ENCODE measurements at regions of chr1 and their contacts with region 1.

Region 1: GRCh38 chr1:84753516-84754385 is 63.5 kb upstream of the SSX2IP start:
- DNase-seq: peak; percentile 75
- H3K4me3 ChIP-seq: no peak overlapping the region
- H3K27ac ChIP-seq: no peak overlapping the region
- H3K27me3 ChIP-seq: peaks cover 2% of the 10 kb centered on the region
- CTCF ChIP-seq: peak; percentile 100

Region 2: DNA sequence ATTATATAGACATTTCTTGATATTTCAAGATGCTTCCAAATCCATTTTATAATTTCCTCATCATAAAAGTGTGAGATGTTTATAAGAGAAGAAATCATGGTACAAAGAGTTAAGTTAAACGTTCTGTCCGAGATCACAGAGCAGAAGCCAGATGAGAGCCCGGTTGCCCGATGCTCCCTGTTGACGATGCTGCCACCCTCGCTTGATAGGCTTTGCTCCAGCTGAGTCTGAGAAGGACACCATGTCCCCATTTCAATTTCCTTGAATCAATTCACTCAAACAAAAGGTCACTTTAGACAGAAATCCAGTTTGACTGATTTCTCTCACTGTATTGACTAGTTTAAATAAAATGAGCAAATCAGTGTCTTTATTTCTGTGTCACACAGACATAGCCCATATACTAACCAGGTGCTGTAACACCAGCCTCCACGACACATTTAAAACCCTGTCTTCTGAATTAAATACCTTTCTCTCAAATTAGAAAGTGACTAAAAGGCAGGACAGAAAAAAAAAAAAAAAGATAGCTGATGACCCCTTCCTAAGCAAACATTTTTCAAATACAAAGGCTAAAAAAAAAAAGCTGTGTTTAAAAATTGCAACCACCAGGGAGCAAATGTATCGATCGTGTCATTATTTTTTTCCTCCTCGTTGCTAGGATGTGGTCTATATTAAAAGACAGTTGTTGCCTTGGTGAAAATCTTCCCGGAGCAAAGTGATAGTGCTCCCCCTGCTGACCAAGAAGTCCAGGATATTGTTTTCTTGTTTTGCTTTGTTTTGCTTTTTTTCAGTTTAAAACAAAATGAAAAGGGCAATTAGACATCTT is 320.3 kb before region 1 on chr1:
- CTCF ChIA-PET with region 1: interaction called, 12 read pairs
- POLR2A ChIA-PET with region 1: no interaction called
- DNase-seq: peak; percentile 58
- H3K4me3 ChIP-seq: no peak overlapping the region; the same call in 1 of the 2 replicates
- H3K27ac ChIP-seq: no peak overlapping the region
- H3K27me3 ChIP-seq: no peaks in the 10 kb centered on the region
- CTCF ChIP-seq: peak; percentile 79

Region 3: GRCh38 chr1:84506002-84506728 is 247.6 kb before region 1 on chr1 and contains the starts of genes GNG5 and SPATA1:
- CTCF ChIA-PET with region 1: interaction called, 16 read pairs
- POLR2A ChIA-PET with region 1: interaction called, 4 read pairs
- DNase-seq: peak; percentile 91
- H3K4me3 ChIP-seq: peak within 1 kb of the TSS; percentile 76
- H3K27ac ChIP-seq: peak within 1 kb of the TSS; percentile 97
- H3K27me3 ChIP-seq: no peaks in the 10 kb centered on the region
- CTCF ChIP-seq: no peak
- polyA plus RNA-seq, gene GNG5: 124 and 136 TPM in 2 replicates
- polyA plus RNA-seq, gene SPATA1: 0.81 and 0.99 TPM in 2 replicates

Region 4: GRCh38 chr1:84653130-84653677 is 100.5 kb before region 1 on chr1:
- CTCF ChIA-PET with region 1: interaction called, 13 read pairs
- POLR2A ChIA-PET with region 1: no interaction called
- DNase-seq: no peak
- H3K4me3 ChIP-seq: no peak overlapping the region
- H3K27ac ChIP-seq: no peak overlapping the region
- H3K27me3 ChIP-seq: no peaks in the 10 kb centered on the region
- CTCF ChIP-seq: peak; percentile 8; the same call in 1 of the 2 replicates

Region 5: DNA sequence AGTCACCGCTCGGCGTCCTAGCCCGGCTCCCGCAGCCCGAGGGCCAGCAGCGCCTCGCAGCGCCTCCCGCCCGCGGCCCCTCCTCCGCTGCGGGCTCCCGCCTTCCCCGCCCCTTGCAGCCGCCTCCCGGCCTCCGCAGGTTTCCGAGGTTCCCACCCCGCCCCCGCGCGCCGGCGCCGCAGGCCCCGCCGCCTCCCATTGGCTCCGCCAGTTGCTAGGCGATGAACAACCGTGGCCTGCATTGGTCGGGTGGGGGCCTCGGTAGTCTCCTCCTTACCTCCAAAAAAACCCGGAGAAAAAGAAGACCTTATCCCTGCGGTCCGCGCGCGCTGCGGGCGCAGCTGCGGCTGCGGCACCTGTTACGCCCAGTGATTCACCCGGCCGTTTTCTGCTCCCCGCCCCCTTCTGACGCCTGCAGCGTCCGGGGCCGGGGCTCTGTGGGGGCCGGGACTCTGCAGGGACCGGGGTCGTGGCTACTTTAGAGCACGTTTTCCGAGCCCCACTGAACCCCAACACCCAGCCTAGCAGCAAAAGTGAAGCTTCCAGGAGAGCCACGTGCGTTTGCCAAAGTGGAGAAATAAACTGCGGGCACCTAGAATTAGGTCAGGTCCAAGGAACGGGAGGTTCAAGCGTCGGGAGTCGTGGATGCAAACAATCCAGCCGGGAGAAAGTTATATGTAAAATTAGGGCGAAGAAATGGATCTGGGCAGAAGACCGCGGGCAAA is 63.2 kb before region 1 on chr1 and contains the start of gene SSX2IP:
- CTCF ChIA-PET with region 1: interaction called, 18 read pairs
- POLR2A ChIA-PET with region 1: no interaction called
- DNase-seq: peak; percentile 90
- H3K4me3 ChIP-seq: peak within 1 kb of the TSS; percentile 73
- H3K27ac ChIP-seq: peak within 1 kb of the TSS; percentile 75
- H3K27me3 ChIP-seq: no peaks in the 10 kb centered on the region
- CTCF ChIP-seq: no peak
- polyA plus RNA-seq, gene SSX2IP: 21.4 and 31.7 TPM in 2 replicates

Region 6: GRCh38 chr1:84763912-84764663 is 10.3 kb after region 1 on chr1:
- CTCF ChIA-PET with region 1: interaction called, 14 read pairs
- POLR2A ChIA-PET with region 1: no interaction called
- DNase-seq: no peak
- H3K4me3 ChIP-seq: no peak overlapping the region
- H3K27ac ChIP-seq: no peak overlapping the region
- H3K27me3 ChIP-seq: peaks cover 16% of the 10 kb centered on the region
- CTCF ChIP-seq: no peak

Region 7: GRCh38 chr1:84936116-84936810 is 182.5 kb after region 1 on chr1:
- CTCF ChIA-PET with region 1: interaction called, 34 read pairs
- POLR2A ChIA-PET with region 1: no interaction called
- DNase-seq: peak; percentile 38
- H3K4me3 ChIP-seq: no peak overlapping the region
- H3K27ac ChIP-seq: no peak overlapping the region
- H3K27me3 ChIP-seq: no peaks in the 10 kb centered on the region
- CTCF ChIP-seq: peak; percentile 95

Measured in AG04450 (cell line).